Psoas muscle (tissue), 8 donors: ENCODE measurements at regions of chr7 and their contacts with region 1.

Region 1: GRCh38 chr7:105678811-105679495 is 97.7 kb upstream of the EFCAB10 start:
- DNase-seq: peak; percentile 80 to 88
- ATAC-seq: peak; percentile 79 to 91 (median 84)
- H3K4me3 ChIP-seq: peak overlapping the region; percentile 55
- H3K27ac ChIP-seq: peak overlapping the region; percentile 69
- H3K4me1 ChIP-seq: peaks cover 42% of the 10 kb centered on the region
- H3K27me3 ChIP-seq: no peaks in the 10 kb centered on the region
- CTCF ChIP-seq: no peak

Region 2: GRCh38 chr7:104772405-104773345 is 906.3 kb before region 1 on chr7:
- intact Hi-C with region 1: no loop called
- DNase-seq: no peak
- ATAC-seq: no peak
- H3K4me3 ChIP-seq: no peak overlapping the region
- H3K27ac ChIP-seq: no peak overlapping the region
- H3K4me1 ChIP-seq: no peaks in the 10 kb centered on the region
- H3K27me3 ChIP-seq: no peaks in the 10 kb centered on the region
- CTCF ChIP-seq: no peak

Region 3: DNA sequence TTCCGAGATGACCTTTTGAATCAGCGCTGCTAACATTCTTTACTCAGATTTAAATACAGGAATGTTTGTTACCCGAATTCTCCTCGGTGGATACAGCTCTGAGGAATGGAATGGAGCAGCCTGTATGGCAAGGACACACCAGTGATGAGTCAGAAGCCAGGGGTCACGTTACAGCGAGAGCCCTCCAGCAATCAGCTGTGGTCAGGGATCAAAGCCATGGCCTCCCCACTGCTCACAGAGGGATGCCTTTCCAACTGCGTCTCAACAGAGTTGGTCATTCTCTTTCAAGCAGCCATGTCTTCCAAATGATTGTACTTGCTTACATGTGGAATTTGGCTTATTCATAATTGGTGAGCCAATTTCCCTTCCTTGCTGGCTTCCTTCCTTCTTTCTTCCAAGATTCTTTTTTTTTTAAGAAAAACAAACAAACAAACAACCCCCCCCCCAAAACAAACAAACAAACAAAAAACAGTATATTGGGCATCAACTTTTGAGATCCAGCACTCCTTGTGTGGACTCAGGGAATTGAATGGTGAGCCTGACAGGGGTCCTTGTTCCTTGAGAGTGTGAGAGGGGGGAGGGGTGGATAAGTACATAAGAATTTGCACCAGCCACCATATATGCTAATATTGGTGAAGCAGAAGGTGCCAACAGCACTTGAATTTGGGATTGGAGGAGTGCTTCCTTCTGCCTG is 97.3 kb after region 1 on chr7:
- intact Hi-C with region 1: loop called in 1 of 2 experiments (anchors 10 kb)
- DNase-seq: peak; percentile 80 to 84
- ATAC-seq: peak; percentile 94 to 99 (median 98)
- H3K4me3 ChIP-seq: no peak overlapping the region
- H3K27ac ChIP-seq: peak overlapping the region; percentile 76
- H3K4me1 ChIP-seq: peaks cover 22% of the 10 kb centered on the region
- H3K27me3 ChIP-seq: no peaks in the 10 kb centered on the region
- CTCF ChIP-seq: no peak

Region 4: GRCh38 chr7:106139265-106140251 is 460.6 kb after region 1 on chr7:
- intact Hi-C with region 1: loop called in 1 of 2 experiments (anchors 10 kb)
- DNase-seq: peak; percentile 37 to 68
- ATAC-seq: peak; percentile 93 to 97 (median 96)
- H3K4me3 ChIP-seq: peak overlapping the region; percentile 52
- H3K27ac ChIP-seq: peak overlapping the region; percentile 96
- H3K4me1 ChIP-seq: peaks cover 21% of the 10 kb centered on the region
- H3K27me3 ChIP-seq: no peaks in the 10 kb centered on the region
- CTCF ChIP-seq: no peak